ENCODE measurements at regions of chr9 and their contacts with region 1.

Region 1: GRCh38 chr9:137200311-137201204 is at the start of gene TPRN:
- H3K4me3 ChIP-seq: peak within 1 kb of the TSS; percentile 86
- H3K27ac ChIP-seq: peak within 1 kb of the TSS; percentile 57; the same call in 1 of the 2 replicates
- H3K4me1 ChIP-seq: peaks cover 9% of the 10 kb centered on the region
- CTCF ChIP-seq: no peak

Region 2: DNA sequence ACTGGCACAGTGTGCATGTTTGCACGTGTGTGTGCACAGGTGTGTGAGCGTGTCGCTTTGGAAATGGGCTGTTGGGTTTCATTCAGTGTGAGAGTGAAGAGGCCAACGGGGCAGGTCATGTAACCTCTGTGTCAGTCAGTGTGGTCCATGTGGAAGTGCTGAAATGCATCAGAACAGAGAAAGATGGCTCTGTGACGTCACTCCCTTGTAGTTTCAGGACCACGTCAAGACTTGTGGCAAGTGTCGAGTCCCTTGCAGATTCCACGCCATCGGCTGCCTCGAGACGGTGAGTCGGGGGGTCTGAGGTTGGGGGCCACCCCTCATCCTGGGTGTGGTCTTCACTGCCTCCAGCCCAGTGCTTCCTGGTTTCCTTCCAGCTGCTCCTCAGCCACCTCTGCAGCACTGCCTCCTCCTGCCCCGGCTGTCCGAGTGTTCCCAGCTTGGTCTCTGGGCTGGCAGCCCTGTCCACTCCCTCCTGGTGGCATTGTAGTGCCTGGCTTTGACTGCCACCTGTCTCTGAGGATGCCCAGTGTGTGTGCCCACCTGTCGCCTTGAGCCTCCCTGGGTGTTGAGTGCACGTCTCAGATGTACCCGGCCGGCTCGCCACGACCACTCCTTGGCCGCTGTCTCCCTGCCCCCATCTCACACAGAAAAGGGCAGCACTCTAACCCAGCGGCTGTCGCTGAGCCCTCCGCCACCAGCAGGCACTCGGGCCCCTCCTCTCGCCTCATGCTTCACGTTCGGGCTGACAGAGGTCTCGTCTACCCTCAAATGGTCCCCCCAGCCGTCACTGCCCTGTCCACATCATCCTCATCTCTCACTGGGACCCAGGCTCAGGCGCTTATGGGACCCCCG is 284.0 kb before region 1 on chr9:
- CTCF ChIA-PET with region 1: no interaction called
- POLR2A ChIA-PET with region 1: no interaction called
- H3K4me3 ChIP-seq: no peak overlapping the region
- H3K27ac ChIP-seq: no peak overlapping the region
- H3K4me1 ChIP-seq: no peaks in the 10 kb centered on the region
- CTCF ChIP-seq: no peak

Region 3: GRCh38 chr9:137138722-137139467 is 61.7 kb before region 1 on chr9 and contains the start of gene GRIN1:
- CTCF ChIA-PET with region 1: interaction called, 3 read pairs
- POLR2A ChIA-PET with region 1: interaction called, 13 read pairs
- H3K4me3 ChIP-seq: no peak within 1 kb of the TSS
- H3K27ac ChIP-seq: no peak within 1 kb of the TSS
- H3K4me1 ChIP-seq: peaks cover 2% of the 10 kb centered on the region; the same call in 1 of the 2 replicates
- CTCF ChIP-seq: no peak

Region 4: DNA sequence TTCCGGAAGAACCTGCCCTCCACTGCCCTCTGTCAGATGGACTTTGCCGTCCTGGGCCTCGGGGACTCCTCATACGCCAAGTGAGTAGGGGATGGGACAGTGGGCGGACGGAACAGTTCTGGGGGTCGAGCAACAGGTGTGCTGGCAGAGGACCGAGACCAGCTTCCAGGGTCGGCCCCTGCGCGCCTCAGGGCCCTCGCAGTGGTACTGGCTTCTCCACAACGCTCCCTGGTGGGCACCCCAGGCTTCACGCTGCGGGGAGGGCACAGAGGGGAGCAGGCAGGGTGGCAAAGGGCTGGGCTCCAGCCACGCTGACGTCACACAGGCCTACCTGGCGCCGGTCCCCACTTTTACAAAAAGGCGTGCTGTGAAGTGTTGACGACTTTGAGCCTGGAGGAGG is 12.0 kb after region 1 on chr9:
- CTCF ChIA-PET with region 1: interaction called, 3 read pairs
- POLR2A ChIA-PET with region 1: interaction called, 304 read pairs
- H3K4me3 ChIP-seq: no peak overlapping the region
- H3K27ac ChIP-seq: no peak overlapping the region
- H3K4me1 ChIP-seq: no peaks in the 10 kb centered on the region
- CTCF ChIP-seq: 0 out of 2 replicates have a peak, but pooled peaks have one; percentile 24

Region 5: GRCh38 chr9:137461663-137462395 is 261.3 kb after region 1 on chr9:
- CTCF ChIA-PET with region 1: no interaction called
- POLR2A ChIA-PET with region 1: no interaction called
- H3K4me3 ChIP-seq: no peak overlapping the region
- H3K27ac ChIP-seq: no peak overlapping the region
- H3K4me1 ChIP-seq: peaks cover 6% of the 10 kb centered on the region
- CTCF ChIP-seq: no peak